ENCODE measurements at regions of chr11 and their contacts with region 1.

Region 1: GRCh38 chr11:102940714-102941588 is 14.6 kb downstream of the MMP13 start:
- DNase-seq: peak; percentile 49
- ATAC-seq: peak; percentile 88
- H3K4me3 Mint-ChIP-seq: no peak overlapping the region
- H3K27ac Mint-ChIP-seq: no peak overlapping the region
- H3K4me1 Mint-ChIP-seq: peaks cover 4% of the 10 kb centered on the region
- H3K27me3 Mint-ChIP-seq: peaks cover 7% of the 10 kb centered on the region

Region 2: DNA sequence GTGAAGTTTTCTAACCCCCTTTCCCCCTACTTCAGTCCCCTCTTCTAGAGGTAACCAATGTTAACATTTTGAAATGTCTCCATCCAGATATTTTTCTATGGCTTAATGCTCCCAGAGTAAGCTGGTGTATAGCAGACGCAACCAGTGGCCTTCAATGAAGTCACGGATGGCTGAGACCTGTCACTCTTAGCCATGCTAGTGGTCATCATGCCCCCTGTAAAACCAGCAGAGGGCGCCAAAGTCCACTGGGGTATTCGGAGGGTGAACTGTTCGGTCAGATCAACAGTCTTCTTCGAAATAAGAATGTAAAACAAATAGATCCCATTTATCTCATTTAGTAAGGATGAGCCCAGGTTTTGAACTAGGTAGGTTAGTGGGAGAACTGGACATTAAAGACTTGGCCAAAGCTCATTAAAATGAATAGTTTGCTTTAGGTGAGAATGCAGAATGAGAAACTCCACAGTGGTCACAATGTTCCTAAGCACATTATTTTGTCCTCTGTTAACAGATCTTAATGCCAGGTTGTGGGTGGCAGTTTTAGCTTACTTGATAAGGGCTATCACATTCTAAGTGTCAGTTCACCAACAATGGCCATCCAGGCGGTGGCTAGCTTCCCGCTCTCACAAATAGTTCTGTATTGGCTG is 207.6 kb before region 1 on chr11:
- CTCF ChIA-PET with region 1: interaction called, 15 read pairs
- POLR2A ChIA-PET with region 1: no interaction called
- intact Hi-C with region 1: loop called (anchors 1 kb)
- DNase-seq: peak; percentile 79
- ATAC-seq: peak; percentile 65
- H3K4me3 Mint-ChIP-seq: no peak overlapping the region
- H3K27ac Mint-ChIP-seq: no peak overlapping the region
- H3K4me1 Mint-ChIP-seq: no peaks in the 10 kb centered on the region
- H3K27me3 Mint-ChIP-seq: peaks cover 14% of the 10 kb centered on the region

Region 3: GRCh38 chr11:102794447-102794781 is 146.5 kb before region 1 on chr11:
- CTCF ChIA-PET with region 1: interaction called, 4 read pairs
- POLR2A ChIA-PET with region 1: no interaction called
- intact Hi-C with region 1: loop called in 1 of 2 experiments (anchors 2 kb)
- DNase-seq: peak; percentile 41
- ATAC-seq: peak; percentile 87
- H3K4me3 Mint-ChIP-seq: no peak overlapping the region
- H3K27ac Mint-ChIP-seq: no peak overlapping the region
- H3K4me1 Mint-ChIP-seq: no peaks in the 10 kb centered on the region
- H3K27me3 Mint-ChIP-seq: peaks cover 4% of the 10 kb centered on the region

Region 4: DNA sequence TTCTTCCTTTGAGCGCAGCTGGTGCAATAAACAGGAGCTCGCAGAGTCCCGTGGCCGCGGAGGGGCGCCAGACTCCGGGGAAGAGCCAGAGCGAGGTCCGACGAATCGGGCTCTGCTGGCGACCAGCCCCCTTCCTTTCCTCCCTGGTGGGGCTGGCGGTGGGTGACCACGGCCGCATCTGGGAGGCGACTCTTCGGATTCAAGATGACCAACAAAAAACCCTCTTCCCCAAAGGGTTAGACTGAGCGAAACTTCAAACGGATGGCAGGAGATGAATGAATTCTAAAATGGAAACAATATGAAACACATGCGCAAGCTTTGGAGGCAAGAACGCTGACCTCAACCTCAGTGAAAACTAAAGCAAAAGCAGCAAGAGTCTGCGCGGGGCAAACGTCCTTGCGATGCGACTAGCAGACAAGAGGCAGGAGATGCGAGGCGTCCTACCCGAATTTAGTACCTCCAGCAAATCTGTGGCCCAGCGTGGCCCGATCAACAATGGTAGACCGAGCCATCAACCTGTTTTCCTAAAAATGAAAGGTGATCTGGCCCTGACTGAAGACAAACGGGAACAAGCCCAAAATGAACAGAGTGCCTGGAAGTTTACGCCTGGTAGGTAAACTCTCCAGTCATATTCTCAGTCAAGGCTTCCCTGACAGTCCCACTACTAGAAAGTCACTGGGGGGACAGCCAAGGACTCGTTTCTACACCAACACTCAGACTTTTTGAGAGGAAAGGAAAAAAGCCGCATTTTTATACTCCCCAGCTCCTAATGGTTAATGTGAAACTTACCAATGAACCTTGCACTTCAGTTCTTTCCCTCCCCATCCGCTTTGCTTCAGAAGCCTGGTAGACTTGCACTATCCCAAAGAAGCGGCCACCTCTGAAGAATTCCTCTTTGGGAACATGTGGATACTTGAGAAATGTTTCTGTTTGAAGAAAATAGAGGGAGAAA is 109.2 kb before region 1 on chr11:
- CTCF ChIA-PET with region 1: no interaction called
- POLR2A ChIA-PET with region 1: no interaction called
- intact Hi-C with region 1: loop called (anchors 1 to 5 kb)
- DNase-seq: peak; percentile 58
- ATAC-seq: no peak
- H3K4me3 Mint-ChIP-seq: no peak overlapping the region
- H3K27ac Mint-ChIP-seq: no peak overlapping the region
- H3K4me1 Mint-ChIP-seq: no peaks in the 10 kb centered on the region
- H3K27me3 Mint-ChIP-seq: peaks cover 37% of the 10 kb centered on the region

Region 5: GRCh38 chr11:102920118-102920684 is 20.8 kb before region 1 on chr11:
- CTCF ChIA-PET with region 1: interaction called, 10 read pairs
- POLR2A ChIA-PET with region 1: no interaction called
- intact Hi-C with region 1: no loop called
- DNase-seq: no peak
- ATAC-seq: no peak
- H3K4me3 Mint-ChIP-seq: no peak overlapping the region
- H3K27ac Mint-ChIP-seq: no peak overlapping the region
- H3K4me1 Mint-ChIP-seq: peaks cover 4% of the 10 kb centered on the region
- H3K27me3 Mint-ChIP-seq: peaks cover 17% of the 10 kb centered on the region

Region 6: GRCh38 chr11:103055221-103055890 is 114.4 kb after region 1 on chr11:
- CTCF ChIA-PET with region 1: interaction called, 3 read pairs
- POLR2A ChIA-PET with region 1: no interaction called
- intact Hi-C with region 1: loop called (anchors 1 kb)
- DNase-seq: no peak
- ATAC-seq: peak; percentile 61
- H3K4me3 Mint-ChIP-seq: no peak overlapping the region
- H3K27ac Mint-ChIP-seq: no peak overlapping the region
- H3K4me1 Mint-ChIP-seq: peaks cover 5% of the 10 kb centered on the region
- H3K27me3 Mint-ChIP-seq: no peaks in the 10 kb centered on the region